Natural killer cell (primary cell): ENCODE measurements at regions of chr19 and their contacts with region 1.

Region 1: GRCh38 chr19:42108527-42109389 is 23.5 kb downstream of the POU2F2 start:
- DNase-seq: peak; percentile 85 to 95
- ATAC-seq: peak; percentile 95 to 100 (median 100)
- H3K4me3 ChIP-seq: no peak overlapping the region
- H3K4me3 Mint-ChIP-seq: no peak overlapping the region
- H3K27ac ChIP-seq: no peak overlapping the region
- H3K27ac Mint-ChIP-seq: peak overlapping the region in 1 of 2 donors; percentile 23
- H3K4me1 ChIP-seq: peaks cover 7% of the 10 kb centered on the region
- H3K4me1 Mint-ChIP-seq: peaks cover 0 to 10% of the 10 kb centered on the region in 2 donors
- H3K27me3 ChIP-seq: no peaks in the 10 kb centered on the region
- H3K27me3 Mint-ChIP-seq: no peaks in the 10 kb centered on the region
- CTCF ChIP-seq: peak; percentile 100

Region 2: DNA sequence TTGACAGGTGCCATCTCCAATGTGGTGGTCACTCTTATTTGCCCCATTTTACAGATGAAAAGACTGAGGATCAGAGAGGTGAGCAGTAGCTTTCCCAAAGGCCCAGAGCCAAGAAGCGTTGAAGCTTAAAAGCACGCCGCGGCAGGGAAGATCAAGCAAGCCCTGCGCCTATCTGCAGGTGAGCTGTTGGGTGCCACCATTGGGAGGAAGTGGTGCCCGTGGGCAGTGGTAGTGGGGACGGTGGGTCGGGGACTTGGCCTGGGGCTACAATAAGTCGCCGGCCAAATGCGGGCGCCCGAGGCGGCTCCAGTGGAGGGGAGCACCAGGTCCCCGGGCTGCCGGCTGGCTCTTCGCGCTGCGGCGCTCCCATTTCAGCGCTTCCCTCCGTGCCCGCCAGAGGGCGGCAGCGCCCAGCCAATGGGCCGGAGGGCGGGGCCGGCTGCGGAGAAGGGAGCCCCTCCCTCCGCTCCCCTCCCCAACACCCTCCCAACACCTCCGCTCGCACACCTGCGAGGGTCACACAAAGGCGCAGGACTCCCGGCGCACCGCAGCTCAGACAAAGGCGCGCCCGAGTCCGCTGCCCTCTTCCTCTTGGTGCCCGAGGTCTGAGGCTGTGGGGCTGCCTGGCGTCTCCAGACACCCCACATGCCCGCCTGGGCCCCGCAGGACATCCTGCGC is 24.2 kb after region 1 on chr19:
- intact Hi-C with region 1: loop called (anchors 1 kb)
- DNase-seq: peak; percentile 83 to 92
- ATAC-seq: peak; percentile 74 to 86 (median 77)
- H3K4me3 ChIP-seq: peak overlapping the region; percentile 73
- H3K4me3 Mint-ChIP-seq: peak overlapping the region; percentile 80
- H3K27ac ChIP-seq: peak overlapping the region; percentile 49
- H3K27ac Mint-ChIP-seq: peak overlapping the region; percentile 58 to 86
- H3K4me1 ChIP-seq: peaks cover 73% of the 10 kb centered on the region
- H3K4me1 Mint-ChIP-seq: peaks cover 36 to 73% of the 10 kb centered on the region in 2 donors
- H3K27me3 ChIP-seq: no peaks in the 10 kb centered on the region
- H3K27me3 Mint-ChIP-seq: no peaks in the 10 kb centered on the region
- CTCF ChIP-seq: peak; percentile 100

Region 3: DNA sequence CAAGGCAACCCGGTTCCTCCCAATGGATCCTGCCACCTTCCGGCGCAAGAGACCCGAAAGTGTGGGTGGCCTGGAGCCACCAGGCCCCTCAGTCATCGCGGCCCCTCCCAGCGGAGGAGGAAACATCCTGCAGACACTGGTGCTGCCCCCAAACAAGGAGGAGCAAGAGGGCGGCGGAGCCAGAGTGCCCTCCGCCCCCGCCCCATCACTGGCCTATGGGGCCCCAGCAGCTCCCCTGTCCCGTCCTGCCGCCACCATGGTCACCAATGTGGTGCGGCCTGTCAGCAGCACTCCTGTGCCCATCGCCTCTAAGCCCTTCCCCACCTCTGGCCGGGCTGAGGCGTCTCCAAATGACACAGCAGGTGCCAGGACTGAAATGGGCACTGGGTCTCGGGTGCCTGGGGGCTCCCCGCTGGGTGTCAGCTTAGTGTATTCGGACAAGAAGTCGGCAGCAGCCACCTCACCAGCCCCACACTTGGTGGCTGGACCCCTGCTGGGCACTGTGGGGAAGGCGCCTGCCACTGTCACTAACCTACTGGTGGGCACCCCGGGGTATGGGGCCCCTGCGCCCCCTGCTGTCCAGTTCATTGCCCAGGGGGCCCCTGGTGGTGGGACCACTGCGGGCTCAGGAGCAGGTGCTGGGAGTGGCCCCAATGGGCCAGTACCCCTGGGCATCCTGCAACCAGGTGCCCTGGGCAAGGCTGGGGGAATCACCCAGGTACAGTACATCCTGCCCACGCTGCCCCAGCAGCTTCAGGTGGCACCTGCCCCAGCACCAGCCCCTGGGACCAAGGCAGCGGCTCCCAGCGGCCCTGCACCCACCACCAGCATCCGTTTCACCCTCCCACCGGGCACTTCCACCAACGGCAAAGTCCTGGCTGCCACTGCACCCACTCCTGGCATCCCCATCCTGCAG is 182.0 kb after region 1 on chr19:
- intact Hi-C with region 1: loop called (anchors 1 kb)
- DNase-seq: peak; percentile 57 to 72
- ATAC-seq: peak; percentile 77 to 84 (median 77)
- H3K4me3 ChIP-seq: no peak overlapping the region
- H3K4me3 Mint-ChIP-seq: no peak overlapping the region
- H3K27ac ChIP-seq: no peak overlapping the region
- H3K27ac Mint-ChIP-seq: no peak overlapping the region
- H3K4me1 ChIP-seq: peaks cover 6% of the 10 kb centered on the region
- H3K4me1 Mint-ChIP-seq: peaks cover 3 to 15% of the 10 kb centered on the region in 2 donors
- H3K27me3 ChIP-seq: no peaks in the 10 kb centered on the region
- H3K27me3 Mint-ChIP-seq: no peaks in the 10 kb centered on the region
- CTCF ChIP-seq: peak; percentile 52

Region 4: GRCh38 chr19:42325273-42325895 is 216.6 kb after region 1 on chr19 and contains the start of gene MEGF8:
- intact Hi-C with region 1: loop called (anchors 1 kb)
- DNase-seq: peak; percentile 96 to 99
- ATAC-seq: peak; percentile 88 to 97 (median 91)
- H3K4me3 ChIP-seq: peak within 1 kb of the TSS; percentile 83
- H3K4me3 Mint-ChIP-seq: peak within 1 kb of the TSS; percentile 95
- H3K27ac ChIP-seq: peak within 1 kb of the TSS; percentile 62
- H3K27ac Mint-ChIP-seq: peak within 1 kb of the TSS; percentile 65 to 79
- H3K4me1 ChIP-seq: peaks cover 20% of the 10 kb centered on the region
- H3K4me1 Mint-ChIP-seq: peaks cover 17 to 29% of the 10 kb centered on the region in 2 donors
- H3K27me3 ChIP-seq: peaks cover 8% of the 10 kb centered on the region
- H3K27me3 Mint-ChIP-seq: peaks cover 15 to 19% of the 10 kb centered on the region in 2 donors
- CTCF ChIP-seq: peak; percentile 82
- total RNA-seq, gene MEGF8: 8.1 to 11.3 (median 10.5) TPM

Region 5: DNA sequence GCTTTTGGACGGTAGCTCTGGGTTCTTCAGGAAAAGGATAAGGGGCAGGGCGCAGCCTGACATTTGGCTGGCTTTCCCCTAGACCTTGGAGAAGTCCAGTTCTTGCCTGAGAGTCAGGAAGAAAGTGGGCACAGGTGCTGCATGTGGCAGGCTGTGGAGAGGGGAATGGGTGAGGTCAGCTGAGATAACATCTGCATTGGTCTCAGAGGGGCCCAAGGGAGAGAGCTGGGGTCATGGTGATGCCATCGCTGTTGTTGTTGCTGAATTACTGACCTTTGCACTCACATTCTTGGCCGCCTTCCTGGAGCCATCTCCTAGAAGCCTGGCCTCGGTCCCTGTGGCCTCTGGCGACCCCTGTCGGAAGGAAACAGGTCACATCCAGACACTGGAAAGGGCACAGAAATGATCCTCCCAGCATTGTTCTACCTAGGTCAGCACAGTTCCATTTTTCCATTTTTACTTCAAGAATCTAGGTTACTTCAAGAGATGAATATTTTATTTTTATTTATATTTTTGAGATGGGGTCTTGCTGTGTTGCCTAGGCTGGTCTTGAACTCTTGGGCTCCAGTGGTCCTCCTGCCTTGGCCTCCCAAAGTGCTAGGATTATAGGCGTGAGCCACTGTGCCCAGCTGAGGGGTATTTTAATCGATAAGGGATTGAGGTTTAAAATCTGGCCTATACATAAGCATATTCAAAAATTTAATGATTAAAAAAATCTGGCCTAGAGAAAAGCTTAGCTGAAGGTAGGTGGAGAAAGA is 324.9 kb after region 1 on chr19:
- intact Hi-C with region 1: loop called (anchors 1 kb)
- DNase-seq: peak; percentile 39 to 79
- ATAC-seq: peak in 2 of 3 donors; percentile 32 to 48
- H3K4me3 ChIP-seq: no peak overlapping the region
- H3K4me3 Mint-ChIP-seq: no peak overlapping the region
- H3K27ac ChIP-seq: no peak overlapping the region
- H3K27ac Mint-ChIP-seq: no peak overlapping the region
- H3K4me1 ChIP-seq: no peaks in the 10 kb centered on the region
- H3K4me1 Mint-ChIP-seq: peaks cover 6% of the 10 kb centered on the region in 2 donors
- H3K27me3 ChIP-seq: no peaks in the 10 kb centered on the region
- H3K27me3 Mint-ChIP-seq: no peaks in the 10 kb centered on the region
- CTCF ChIP-seq: peak; percentile 48